ENCODE measurements at regions of chr4 and their contacts with region 1.

Region 1: GRCh38 chr4:61517144-61517543 is 317.0 kb downstream of the ADGRL3 start:
- DNase-seq: peak; percentile 83
- ATAC-seq: peak; percentile 99
- H3K4me3 Mint-ChIP-seq: peak overlapping the region; percentile 57
- H3K27ac Mint-ChIP-seq: no peak overlapping the region
- H3K4me1 Mint-ChIP-seq: peaks cover 57% of the 10 kb centered on the region
- H3K27me3 Mint-ChIP-seq: no peaks in the 10 kb centered on the region
- CTCF ChIP-seq: no peak; the same call in 1 of the 2 replicates

Region 2: GRCh38 chr4:61590881-61591280 is 73.7 kb after region 1 on chr4:
- CTCF ChIA-PET with region 1: interaction called, 13 read pairs
- POLR2A ChIA-PET with region 1: no interaction called
- DNase-seq: no peak
- ATAC-seq: peak; percentile 60
- H3K4me3 Mint-ChIP-seq: no peak overlapping the region
- H3K27ac Mint-ChIP-seq: no peak overlapping the region
- H3K4me1 Mint-ChIP-seq: no peaks in the 10 kb centered on the region
- H3K27me3 Mint-ChIP-seq: no peaks in the 10 kb centered on the region
- CTCF ChIP-seq: peak; percentile 30